T-cell (primary cell): ENCODE measurements at regions of chr3 and their contacts with region 1.

Region 1: DNA sequence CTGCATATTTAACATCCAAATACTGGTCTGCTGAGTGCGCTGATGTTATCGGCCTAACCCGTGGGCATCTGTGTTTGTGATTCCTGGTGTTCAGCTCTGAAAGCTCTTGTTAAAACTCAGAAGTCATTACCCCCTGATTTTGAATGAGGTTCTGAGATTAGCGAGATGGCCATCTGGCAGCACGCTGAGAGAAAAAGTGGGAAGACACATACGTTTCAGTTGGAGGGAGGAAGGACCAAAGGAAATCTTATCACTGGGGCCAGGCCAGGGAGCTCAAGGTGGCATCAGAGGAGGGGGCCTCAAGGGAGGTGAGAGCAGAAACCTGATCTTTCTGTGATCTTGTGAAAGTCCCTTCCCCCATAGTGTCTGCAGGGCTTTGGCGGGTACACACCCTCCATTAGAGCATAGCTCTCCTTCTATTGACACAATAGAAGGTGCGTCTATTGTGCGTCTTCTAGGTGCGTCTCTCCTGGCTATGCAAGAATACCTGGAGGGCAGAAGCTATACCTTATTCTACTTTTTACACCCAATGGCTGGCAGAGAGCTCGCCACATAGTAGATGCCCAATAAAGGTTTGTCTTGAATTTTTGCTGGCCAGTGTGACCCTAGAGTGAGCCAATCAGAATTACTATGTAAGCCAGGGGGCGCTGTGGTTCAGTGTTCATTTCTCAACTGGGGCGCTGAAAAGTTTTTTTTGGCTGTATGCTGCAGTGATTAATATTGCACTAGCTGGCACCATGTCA is 182.4 kb downstream of the SHQ1 start:
- DNase-seq: peak in 34 of 35 experiments; percentile 11 to 73 (median 50)
- ATAC-seq: peak; percentile 57 to 66 (median 62)
- H3K4me3 ChIP-seq: no peak overlapping the region
- H3K4me3 Mint-ChIP-seq: no peak overlapping the region
- H3K27ac ChIP-seq: no peak overlapping the region
- H3K27ac Mint-ChIP-seq: no peak overlapping the region
- H3K4me1 ChIP-seq: no peaks in the 10 kb centered on the region
- H3K4me1 Mint-ChIP-seq: no peaks in the 10 kb centered on the region
- H3K27me3 ChIP-seq: peaks cover 0 to 6% of the 10 kb centered on the region in 2 experiments
- H3K27me3 Mint-ChIP-seq: no peaks in the 10 kb centered on the region

Region 2: GRCh38 chr3:71875461-71875947 is 790.4 kb before region 1 on chr3:
- CTCF ChIA-PET with region 1: interaction called, 6 to 13 read pairs
- POLR2A ChIA-PET with region 1: no interaction called
- DNase-seq: peak; percentile 46 to 83 (median 70)
- ATAC-seq: peak; percentile 95 to 99 (median 97)
- H3K4me3 ChIP-seq: no peak overlapping the region
- H3K4me3 Mint-ChIP-seq: no peak overlapping the region
- H3K27ac ChIP-seq: no peak overlapping the region
- H3K27ac Mint-ChIP-seq: no peak overlapping the region
- H3K4me1 ChIP-seq: peaks cover 0 to 3% of the 10 kb centered on the region in 2 experiments
- H3K4me1 Mint-ChIP-seq: peaks cover 13 to 18% (median 17%) of the 10 kb centered on the region in 3 donors
- H3K27me3 ChIP-seq: no peaks in the 10 kb centered on the region
- H3K27me3 Mint-ChIP-seq: peaks cover 4 to 6% of the 10 kb centered on the region in 2 donors

Region 3: GRCh38 chr3:72818092-72818773 is 152.4 kb after region 1 on chr3:
- CTCF ChIA-PET with region 1: interaction called, 84 to 123 read pairs
- POLR2A ChIA-PET with region 1: interaction called in 1 of 2 experiments, 6 read pairs
- DNase-seq: peak in 1 of 35 experiments; percentile 30
- ATAC-seq: no peak
- H3K4me3 ChIP-seq: no peak overlapping the region
- H3K4me3 Mint-ChIP-seq: no peak overlapping the region
- H3K27ac ChIP-seq: no peak overlapping the region
- H3K27ac Mint-ChIP-seq: peak overlapping the region in 1 of 2 donors; percentile 23
- H3K4me1 ChIP-seq: peaks cover 13 to 21% of the 10 kb centered on the region in 2 experiments
- H3K4me1 Mint-ChIP-seq: peaks cover 0 to 7% (median 0%) of the 10 kb centered on the region in 3 donors
- H3K27me3 ChIP-seq: no peaks in the 10 kb centered on the region
- H3K27me3 Mint-ChIP-seq: no peaks in the 10 kb centered on the region

Region 4: GRCh38 chr3:72836923-72837322 is 171.1 kb after region 1 on chr3:
- CTCF ChIA-PET with region 1: interaction called in 1 of 2 experiments, 11 read pairs
- POLR2A ChIA-PET with region 1: no interaction called
- DNase-seq: no peak
- ATAC-seq: no peak
- H3K4me3 ChIP-seq: no peak overlapping the region
- H3K4me3 Mint-ChIP-seq: no peak overlapping the region
- H3K27ac ChIP-seq: no peak overlapping the region
- H3K27ac Mint-ChIP-seq: no peak overlapping the region
- H3K4me1 ChIP-seq: no peaks in the 10 kb centered on the region
- H3K4me1 Mint-ChIP-seq: peaks cover 0 to 8% (median 1%) of the 10 kb centered on the region in 3 donors
- H3K27me3 ChIP-seq: no peaks in the 10 kb centered on the region
- H3K27me3 Mint-ChIP-seq: no peaks in the 10 kb centered on the region

Region 5: GRCh38 chr3:73056014-73056844 is 390.4 kb after region 1 on chr3:
- CTCF ChIA-PET with region 1: interaction called, 3 to 10 read pairs
- POLR2A ChIA-PET with region 1: no interaction called
- DNase-seq: peak in 1 of 35 experiments; percentile 51
- ATAC-seq: no peak
- H3K4me3 ChIP-seq: no peak overlapping the region
- H3K4me3 Mint-ChIP-seq: no peak overlapping the region
- H3K27ac ChIP-seq: peak overlapping the region; percentile 41
- H3K27ac Mint-ChIP-seq: peak overlapping the region in 1 of 2 donors; percentile 54
- H3K4me1 ChIP-seq: no peaks in the 10 kb centered on the region
- H3K4me1 Mint-ChIP-seq: peaks cover 25 to 30% (median 28%) of the 10 kb centered on the region in 3 donors
- H3K27me3 ChIP-seq: no peaks in the 10 kb centered on the region
- H3K27me3 Mint-ChIP-seq: no peaks in the 10 kb centered on the region